Activated CD8-positive, alpha-beta T cell treated with anti-CD3 and anti-CD28 coated beads, Interleukin-2, amount 10 ng/mL, durations not matched to agents 7 days and 5 days (primary cell): ENCODE measurements at regions of chr19 and their contacts with region 1.

Region 1: GRCh38 chr19:4267101-4267900 is 11.8 kb upstream of the SHD start:
- DNase-seq: peak; percentile 77
- ATAC-seq: peak; percentile 60
- H3K4me3 Mint-ChIP-seq: no peak overlapping the region
- H3K27ac Mint-ChIP-seq: peak overlapping the region; percentile 78
- H3K4me1 Mint-ChIP-seq: peaks cover 43% of the 10 kb centered on the region
- H3K27me3 Mint-ChIP-seq: no peaks in the 10 kb centered on the region

Region 2: DNA sequence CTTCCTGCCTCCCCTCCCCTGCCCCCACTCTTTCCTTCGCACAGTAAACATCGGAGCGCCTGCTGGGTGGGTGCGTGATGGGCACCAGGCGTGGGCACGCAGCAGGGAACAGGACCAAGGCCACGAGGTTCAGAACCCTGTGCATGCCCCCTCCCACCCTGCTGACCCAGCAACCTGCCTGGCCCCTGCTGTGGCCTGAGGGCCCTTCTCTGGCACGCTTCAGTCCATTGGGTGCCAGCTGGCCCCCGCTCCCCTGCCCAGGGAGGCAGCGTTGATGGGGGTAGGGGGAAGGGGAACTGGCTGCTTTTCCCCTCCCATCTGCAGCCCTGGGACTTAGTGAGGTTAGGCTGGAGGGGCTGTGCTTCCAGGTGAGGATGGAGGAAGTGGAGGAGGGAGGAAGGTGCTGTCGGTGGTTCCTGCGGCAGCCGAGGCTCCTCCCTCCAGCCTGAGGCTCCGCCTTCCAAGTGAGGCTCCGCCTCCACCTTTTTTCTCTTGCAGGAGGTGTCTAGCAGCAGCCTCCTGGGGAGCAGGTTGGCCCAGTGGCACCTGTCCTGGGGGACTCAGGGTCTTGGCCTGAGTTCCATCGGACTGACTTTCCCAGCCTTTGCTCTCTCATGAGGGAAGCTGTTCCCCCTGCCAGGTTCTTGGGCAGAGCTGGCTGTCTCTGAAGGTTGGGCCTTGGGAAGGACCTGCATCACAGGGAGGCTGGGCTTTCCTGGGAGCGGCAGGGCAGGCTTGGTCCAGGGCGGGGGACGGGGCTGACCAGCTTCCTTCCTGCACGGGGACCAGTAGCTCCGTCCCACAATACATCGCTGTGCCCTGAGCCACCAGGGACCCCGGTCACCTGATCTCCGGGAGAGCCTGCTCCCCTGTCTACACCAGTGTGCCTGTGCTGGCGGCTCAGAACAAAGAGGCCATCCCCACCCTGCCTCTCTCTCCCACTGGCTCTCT is 252.5 kb before region 1 on chr19:
- CTCF ChIA-PET with region 1: no interaction called
- POLR2A ChIA-PET with region 1: no interaction called
- DNase-seq: peak; percentile 56
- ATAC-seq: peak; percentile 52
- H3K4me3 Mint-ChIP-seq: no peak overlapping the region
- H3K27ac Mint-ChIP-seq: no peak overlapping the region
- H3K4me1 Mint-ChIP-seq: peaks cover 8% of the 10 kb centered on the region
- H3K27me3 Mint-ChIP-seq: no peaks in the 10 kb centered on the region

Region 3: DNA sequence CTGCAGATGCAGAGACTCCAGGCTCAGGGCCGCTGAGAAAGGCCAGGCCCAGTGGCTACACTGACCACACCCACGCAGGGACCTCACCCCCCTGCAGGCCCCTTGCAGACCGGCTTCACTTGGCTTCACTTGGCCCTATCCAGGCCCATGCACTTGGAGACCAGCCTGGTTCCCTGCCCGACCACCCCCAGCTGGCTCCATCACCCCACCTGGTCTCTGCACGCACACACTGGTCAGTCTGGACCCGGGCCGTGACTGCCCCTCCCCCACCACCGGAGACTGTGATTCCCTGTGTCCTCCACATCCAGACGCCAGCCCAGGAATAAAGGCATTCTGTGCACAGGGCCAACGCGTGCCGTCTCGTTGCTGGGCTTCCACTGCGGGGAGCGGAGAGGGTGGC is 42.8 kb before region 1 on chr19:
- CTCF ChIA-PET with region 1: no interaction called
- POLR2A ChIA-PET with region 1: no interaction called
- DNase-seq: no peak
- ATAC-seq: no peak
- H3K4me3 Mint-ChIP-seq: no peak overlapping the region
- H3K27ac Mint-ChIP-seq: no peak overlapping the region
- H3K4me1 Mint-ChIP-seq: no peaks in the 10 kb centered on the region
- H3K27me3 Mint-ChIP-seq: no peaks in the 10 kb centered on the region

Region 4: GRCh38 chr19:4256563-4256962 is 10.7 kb before region 1 on chr19:
- CTCF ChIA-PET with region 1: interaction called, 10 read pairs
- POLR2A ChIA-PET with region 1: no interaction called
- DNase-seq: no peak
- ATAC-seq: no peak
- H3K4me3 Mint-ChIP-seq: no peak overlapping the region
- H3K27ac Mint-ChIP-seq: no peak overlapping the region
- H3K4me1 Mint-ChIP-seq: peaks cover 5% of the 10 kb centered on the region
- H3K27me3 Mint-ChIP-seq: no peaks in the 10 kb centered on the region

Region 5: DNA sequence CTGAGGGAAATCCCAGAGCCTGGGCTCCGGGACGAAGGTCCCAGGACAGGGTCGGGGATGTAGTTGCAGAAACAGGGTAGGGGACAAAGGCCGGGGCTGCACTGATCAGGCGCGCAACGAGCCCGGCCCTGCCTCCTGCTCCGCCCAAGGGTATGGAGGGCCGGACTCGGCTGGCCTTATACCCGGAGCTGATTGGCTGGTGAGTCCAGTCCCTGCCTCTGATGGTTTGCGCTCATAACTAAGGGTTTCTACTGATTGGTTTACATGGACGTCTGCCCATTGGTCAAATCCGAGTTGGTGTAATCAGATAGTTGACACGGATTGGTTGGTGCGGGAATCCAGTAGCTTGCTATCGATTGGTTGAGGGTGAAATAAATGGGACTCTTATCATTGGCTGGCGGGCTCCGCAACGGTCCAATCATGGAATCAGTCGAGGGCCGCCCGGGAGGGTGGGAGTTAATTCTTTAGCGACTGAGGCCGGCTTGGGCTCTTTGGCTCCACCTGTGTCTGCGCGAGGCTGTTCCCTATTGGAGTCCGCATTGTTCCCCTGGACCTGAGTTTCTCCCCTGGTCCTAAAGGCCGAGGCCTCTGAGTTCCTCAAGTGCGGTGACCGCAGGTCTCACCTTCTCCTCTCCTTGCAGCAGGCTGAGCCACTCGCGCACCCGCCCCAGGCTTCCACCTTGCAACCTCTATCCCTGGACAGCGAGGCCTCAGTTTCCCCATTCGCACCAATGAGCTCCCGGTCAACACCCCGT is 75.5 kb after region 1 on chr19:
- CTCF ChIA-PET with region 1: interaction called, 39 read pairs
- POLR2A ChIA-PET with region 1: interaction called, 3 read pairs
- DNase-seq: peak; percentile 98
- ATAC-seq: peak; percentile 92
- H3K4me3 Mint-ChIP-seq: peak overlapping the region; percentile 89
- H3K27ac Mint-ChIP-seq: peak overlapping the region; percentile 94
- H3K4me1 Mint-ChIP-seq: peaks cover 31% of the 10 kb centered on the region
- H3K27me3 Mint-ChIP-seq: no peaks in the 10 kb centered on the region

Region 6: GRCh38 chr19:4400135-4400936 is 133.0 kb after region 1 on chr19 and contains the start of gene SH3GL1:
- CTCF ChIA-PET with region 1: interaction called, 32 read pairs
- POLR2A ChIA-PET with region 1: interaction called, 3 read pairs
- DNase-seq: peak; percentile 94
- ATAC-seq: peak; percentile 66
- H3K4me3 Mint-ChIP-seq: peak within 1 kb of the TSS; percentile 95
- H3K27ac Mint-ChIP-seq: peak within 1 kb of the TSS; percentile 93
- H3K4me1 Mint-ChIP-seq: peaks cover 62% of the 10 kb centered on the region
- H3K27me3 Mint-ChIP-seq: no peaks in the 10 kb centered on the region
- total RNA-seq, gene SH3GL1: 65.1 to 67.9 TPM